Activated T-helper 2 cell treated with anti-CD3 and anti-CD28 coated beads, Interferon-gamma antibody, Interleukin-2, Interleukin-4, amounts not matched to agents 10 μg/mL and 5 μg/mL and 100 μg/mL, durations not matched to agents 14 hours and 24 hours and 36 hours (primary cell): ENCODE measurements at regions of chr11 and their contacts with region 1.

Region 1: GRCh38 chr11:95661162-95661561 is 128.4 kb downstream of the FAM76B start:
- DNase-seq: no peak
- H3K4me3 Mint-ChIP-seq: no peak overlapping the region
- H3K27ac Mint-ChIP-seq: no peak overlapping the region
- H3K4me1 Mint-ChIP-seq: peaks cover 26% of the 10 kb centered on the region
- H3K27me3 Mint-ChIP-seq: no peaks in the 10 kb centered on the region

Region 2: DNA sequence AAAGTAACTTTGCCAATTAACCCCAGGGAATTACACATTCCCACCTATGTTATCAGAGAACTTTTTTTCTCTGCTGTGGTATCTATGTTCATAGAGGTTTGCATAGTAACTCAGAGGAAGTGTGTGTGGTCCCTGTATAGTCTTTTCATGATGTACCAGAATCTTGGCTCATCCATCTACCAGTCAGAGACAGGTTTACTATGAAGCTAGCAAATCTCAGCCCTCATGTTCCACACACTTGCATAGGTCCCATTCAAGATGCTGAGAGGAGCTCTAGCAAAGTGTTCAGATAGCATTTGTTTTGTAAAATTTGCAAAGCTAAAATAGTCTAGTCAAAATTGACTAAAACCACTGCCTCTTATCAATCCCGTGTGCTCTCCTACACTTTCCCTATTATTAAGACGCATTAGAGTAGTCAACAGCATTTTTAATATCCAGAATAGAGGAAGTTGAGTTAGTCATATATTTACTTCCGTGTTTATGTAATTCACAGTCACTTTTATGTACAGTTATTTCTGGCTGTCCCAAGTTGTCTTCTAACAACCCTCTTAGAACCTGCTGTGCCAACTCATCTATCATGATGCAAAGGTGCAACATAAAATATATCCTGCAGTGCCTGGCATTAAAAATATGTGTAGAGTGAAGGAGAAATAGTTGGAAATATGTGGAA is 55.8 kb before region 1 on chr11:
- intact Hi-C with region 1: loop called (anchors 5 kb)
- DNase-seq: no peak
- H3K4me3 Mint-ChIP-seq: no peak overlapping the region
- H3K27ac Mint-ChIP-seq: no peak overlapping the region
- H3K4me1 Mint-ChIP-seq: peaks cover 5% of the 10 kb centered on the region
- H3K27me3 Mint-ChIP-seq: no peaks in the 10 kb centered on the region

Region 3: GRCh38 chr11:95680169-95680929 is 19.2 kb after region 1 on chr11:
- intact Hi-C with region 1: loop called (anchors 1 kb)
- DNase-seq: no peak
- H3K4me3 Mint-ChIP-seq: no peak overlapping the region
- H3K27ac Mint-ChIP-seq: peak overlapping the region; percentile 71
- H3K4me1 Mint-ChIP-seq: peaks cover 87% of the 10 kb centered on the region
- H3K27me3 Mint-ChIP-seq: no peaks in the 10 kb centered on the region